Activated CD4-positive, alpha-beta memory T cell treated with anti-CD3 and anti-CD28 coated beads, Interleukin-2, amount 10 ng/mL, durations not matched to agents 7 days and 5 days (primary cell): ENCODE measurements at regions of chr2 and their contacts with region 1.

Region 1: DNA sequence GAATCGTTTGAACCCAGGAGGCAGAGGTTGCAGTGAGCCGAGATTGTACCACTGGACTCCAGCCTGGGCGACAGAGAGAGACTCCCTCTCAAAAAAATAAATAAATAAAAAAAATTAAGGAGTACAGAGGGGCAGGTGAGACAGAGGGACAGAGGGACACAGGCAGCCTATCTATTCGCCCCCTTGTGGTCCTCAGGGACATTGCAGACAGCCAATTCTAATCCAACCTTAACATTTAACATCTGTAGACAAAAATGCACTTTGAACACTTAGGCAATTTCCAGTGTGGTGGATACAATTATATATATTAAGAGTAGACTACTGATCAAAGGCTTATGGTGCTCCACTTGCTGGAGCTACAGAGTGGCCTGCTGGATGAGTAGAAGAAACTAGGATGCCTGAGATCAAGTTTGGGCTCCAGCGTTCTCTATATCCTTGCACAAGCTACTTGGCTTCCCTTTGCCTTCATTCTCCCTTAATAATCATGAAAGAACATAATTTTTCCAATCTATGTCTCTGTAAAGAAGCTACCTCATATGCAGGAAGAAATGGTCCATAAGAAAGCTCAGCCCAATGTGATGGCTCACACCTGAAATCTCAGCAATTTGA is 8.2 kb upstream of the SMARCAL1 start:
- DNase-seq: peak; percentile 45
- H3K4me3 Mint-ChIP-seq: no peak overlapping the region
- H3K27ac Mint-ChIP-seq: no peak overlapping the region
- H3K4me1 Mint-ChIP-seq: no peaks in the 10 kb centered on the region
- H3K27me3 Mint-ChIP-seq: peaks cover 18% of the 10 kb centered on the region

Region 2: DNA sequence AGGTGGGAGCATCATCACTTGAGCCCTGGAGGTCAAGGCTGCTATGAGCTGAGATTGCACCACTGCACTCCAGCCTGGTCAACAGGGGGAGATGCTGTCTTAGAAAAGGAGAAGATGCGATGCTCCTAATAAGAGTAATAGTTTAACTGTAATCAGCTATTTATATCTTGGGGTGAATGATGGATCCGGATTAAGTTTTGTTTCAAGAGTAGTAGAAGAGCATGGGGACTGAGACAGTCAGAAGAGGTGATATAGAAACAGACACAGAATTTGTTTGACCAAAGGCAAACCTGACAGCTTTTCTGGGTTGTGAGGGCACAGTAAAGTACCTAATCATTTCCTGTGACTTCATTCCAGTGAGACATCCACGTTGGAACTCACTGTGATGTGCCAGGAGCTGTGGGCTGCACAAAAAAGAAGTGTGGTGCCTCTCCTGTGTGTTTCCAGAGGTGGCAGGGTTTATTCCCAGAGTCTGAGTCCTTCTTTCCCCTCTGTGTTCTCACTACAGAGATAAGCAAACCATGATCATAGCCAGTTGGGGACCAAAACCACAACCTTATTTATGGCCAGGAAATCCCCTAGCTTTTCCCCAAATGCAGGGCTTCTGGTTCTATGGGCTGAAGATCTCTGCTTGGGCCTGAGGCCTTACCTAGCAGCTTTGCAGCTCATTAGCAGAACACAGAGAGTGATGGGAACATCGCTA is 181.3 kb before region 1 on chr2:
- CTCF ChIA-PET with region 1: interaction called, 15 read pairs
- POLR2A ChIA-PET with region 1: no interaction called
- DNase-seq: no peak
- H3K4me3 Mint-ChIP-seq: no peak overlapping the region
- H3K27ac Mint-ChIP-seq: peak overlapping the region; percentile 57
- H3K4me1 Mint-ChIP-seq: peaks cover 51% of the 10 kb centered on the region
- H3K27me3 Mint-ChIP-seq: no peaks in the 10 kb centered on the region

Region 3: GRCh38 chr2:216315789-216316603 is 88.1 kb before region 1 on chr2:
- CTCF ChIA-PET with region 1: no interaction called
- POLR2A ChIA-PET with region 1: no interaction called
- DNase-seq: no peak
- H3K4me3 Mint-ChIP-seq: no peak overlapping the region
- H3K27ac Mint-ChIP-seq: no peak overlapping the region
- H3K4me1 Mint-ChIP-seq: no peaks in the 10 kb centered on the region
- H3K27me3 Mint-ChIP-seq: peaks cover 14% of the 10 kb centered on the region

Region 4: GRCh38 chr2:216436383-216436782 is 32.3 kb after region 1 on chr2:
- CTCF ChIA-PET with region 1: no interaction called
- POLR2A ChIA-PET with region 1: no interaction called
- DNase-seq: no peak
- H3K4me3 Mint-ChIP-seq: no peak overlapping the region
- H3K27ac Mint-ChIP-seq: no peak overlapping the region
- H3K4me1 Mint-ChIP-seq: peaks cover under 1% of the 10 kb centered on the region
- H3K27me3 Mint-ChIP-seq: no peaks in the 10 kb centered on the region

Region 5: GRCh38 chr2:216752855-216753505 is 348.9 kb after region 1 on chr2:
- CTCF ChIA-PET with region 1: no interaction called
- POLR2A ChIA-PET with region 1: no interaction called
- DNase-seq: no peak
- H3K4me3 Mint-ChIP-seq: no peak overlapping the region
- H3K27ac Mint-ChIP-seq: no peak overlapping the region
- H3K4me1 Mint-ChIP-seq: no peaks in the 10 kb centered on the region
- H3K27me3 Mint-ChIP-seq: peaks cover 31% of the 10 kb centered on the region